Pancreas (tissue), 10 donors: ENCODE measurements at regions of chr9 and their contacts with region 1.

Region 1: DNA sequence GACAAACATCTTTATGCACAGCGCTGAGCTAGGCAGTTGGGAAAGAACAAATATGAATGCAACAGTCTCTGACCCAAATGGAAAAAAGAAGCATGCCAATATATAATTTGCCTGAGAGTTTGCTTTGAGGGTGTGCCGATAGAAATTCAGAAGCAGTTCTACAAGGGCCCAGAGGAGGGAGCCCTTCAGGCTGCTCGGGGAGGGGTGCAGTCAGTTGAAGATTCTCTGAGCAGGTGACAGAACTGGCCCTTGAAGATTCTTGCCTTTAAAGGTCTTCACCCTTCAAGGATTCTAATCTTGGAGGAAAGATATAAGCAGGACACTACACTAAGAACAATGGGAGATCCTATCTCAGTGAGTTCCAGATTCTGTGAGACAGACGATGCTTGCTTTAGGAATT is 3.7 kb upstream of the PAPPA start:
- DNase-seq: peak in 3 of 6 donors; percentile 25 to 56 (median 33)
- ATAC-seq: peak; percentile 69 to 81 (median 74)
- H3K4me3 ChIP-seq: no peak overlapping the region
- H3K27ac ChIP-seq: no peak overlapping the region
- H3K4me1 ChIP-seq: no peaks in the 10 kb centered on the region
- H3K27me3 ChIP-seq: peaks cover 0 to 8% (median 0%) of the 10 kb centered on the region in 4 donors
- CTCF ChIP-seq: peak; percentile 48 to 64 (median 52)

Region 2: DNA sequence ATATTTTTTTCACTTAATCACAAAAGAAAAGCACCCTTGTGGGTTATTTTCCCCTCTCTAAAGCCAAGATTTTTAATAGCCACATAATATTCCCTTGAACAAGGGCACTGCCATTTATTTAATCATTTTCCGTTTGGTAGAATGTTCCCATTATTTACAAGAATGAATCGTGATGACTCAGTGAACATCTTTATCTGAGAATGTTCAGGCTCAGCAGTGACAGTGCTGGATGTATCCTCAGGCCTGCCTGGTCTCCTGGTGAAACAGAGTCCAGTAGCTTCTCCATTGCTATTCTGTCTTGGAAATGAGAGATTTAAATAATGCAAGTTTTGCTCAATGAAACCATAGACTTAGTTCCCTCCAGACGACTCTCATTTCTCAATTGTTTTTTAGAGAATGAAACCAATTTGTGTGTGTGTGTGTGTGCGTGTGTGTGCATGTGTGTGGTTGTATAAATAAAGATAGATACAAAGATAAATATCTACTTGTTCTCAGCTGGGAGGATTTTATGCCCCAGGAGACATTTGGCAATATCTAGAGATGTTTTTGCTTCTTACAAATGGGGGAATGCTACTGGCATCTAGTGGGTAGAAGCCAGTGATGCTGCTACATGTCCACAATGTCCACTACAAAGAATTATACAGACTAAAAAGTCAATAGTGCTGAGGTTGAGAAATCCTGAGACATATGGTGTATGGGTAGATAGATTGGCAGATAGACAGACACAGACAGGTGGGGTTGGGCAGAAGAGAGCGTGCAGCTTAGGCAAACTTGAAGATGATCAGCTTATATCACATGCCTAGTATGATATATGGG is 58.8 kb after region 1 on chr9:
- intact Hi-C with region 1: no loop called
- DNase-seq: no peak
- ATAC-seq: no peak
- H3K4me3 ChIP-seq: no peak overlapping the region
- H3K27ac ChIP-seq: no peak overlapping the region
- H3K4me1 ChIP-seq: no peaks in the 10 kb centered on the region
- H3K27me3 ChIP-seq: no peaks in the 10 kb centered on the region
- CTCF ChIP-seq: no peak

Region 3: DNA sequence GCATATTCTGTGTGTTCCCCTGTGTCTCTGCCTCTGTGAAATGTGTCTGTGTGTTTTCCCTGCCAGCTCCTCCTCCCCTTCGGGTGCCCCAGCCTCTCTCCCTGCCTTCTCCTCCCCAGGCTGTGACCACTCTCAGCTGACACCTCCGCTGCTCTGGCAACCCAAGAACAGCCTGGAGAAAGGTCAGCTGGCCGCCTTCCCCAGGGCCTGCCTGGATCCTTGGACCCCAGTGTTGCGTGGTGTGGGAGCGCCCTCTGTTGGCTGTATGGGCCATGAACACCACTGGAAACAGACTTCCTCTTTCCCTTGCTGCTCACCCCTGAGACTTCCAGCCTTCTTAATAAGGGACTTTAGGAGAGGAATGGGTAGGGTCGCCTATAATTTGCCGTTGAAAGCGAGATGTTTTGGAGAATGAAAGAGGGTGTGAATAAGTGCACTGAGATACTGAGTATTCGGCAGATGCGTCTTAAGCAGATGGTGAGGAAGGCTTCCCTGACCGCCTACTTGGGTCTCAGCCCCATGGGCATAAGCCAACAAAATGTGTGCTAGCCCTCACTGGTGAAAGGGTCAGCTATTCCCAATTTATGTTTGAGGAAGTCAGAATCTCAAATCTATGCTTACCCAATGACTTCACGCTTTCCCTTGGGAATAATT is 422.4 kb after region 1 on chr9:
- intact Hi-C with region 1: loop called in 2 of 3 experiments (anchors 5 to 10 kb)
- DNase-seq: peak; percentile 87 to 95 (median 94)
- ATAC-seq: peak; percentile 86 to 92 (median 90)
- H3K4me3 ChIP-seq: no peak overlapping the region
- H3K27ac ChIP-seq: no peak overlapping the region
- H3K4me1 ChIP-seq: peaks cover 14 to 52% (median 26%) of the 10 kb centered on the region in 3 donors
- H3K27me3 ChIP-seq: no peaks in the 10 kb centered on the region
- CTCF ChIP-seq: peak; percentile 66 to 91 (median 80)

Region 4: DNA sequence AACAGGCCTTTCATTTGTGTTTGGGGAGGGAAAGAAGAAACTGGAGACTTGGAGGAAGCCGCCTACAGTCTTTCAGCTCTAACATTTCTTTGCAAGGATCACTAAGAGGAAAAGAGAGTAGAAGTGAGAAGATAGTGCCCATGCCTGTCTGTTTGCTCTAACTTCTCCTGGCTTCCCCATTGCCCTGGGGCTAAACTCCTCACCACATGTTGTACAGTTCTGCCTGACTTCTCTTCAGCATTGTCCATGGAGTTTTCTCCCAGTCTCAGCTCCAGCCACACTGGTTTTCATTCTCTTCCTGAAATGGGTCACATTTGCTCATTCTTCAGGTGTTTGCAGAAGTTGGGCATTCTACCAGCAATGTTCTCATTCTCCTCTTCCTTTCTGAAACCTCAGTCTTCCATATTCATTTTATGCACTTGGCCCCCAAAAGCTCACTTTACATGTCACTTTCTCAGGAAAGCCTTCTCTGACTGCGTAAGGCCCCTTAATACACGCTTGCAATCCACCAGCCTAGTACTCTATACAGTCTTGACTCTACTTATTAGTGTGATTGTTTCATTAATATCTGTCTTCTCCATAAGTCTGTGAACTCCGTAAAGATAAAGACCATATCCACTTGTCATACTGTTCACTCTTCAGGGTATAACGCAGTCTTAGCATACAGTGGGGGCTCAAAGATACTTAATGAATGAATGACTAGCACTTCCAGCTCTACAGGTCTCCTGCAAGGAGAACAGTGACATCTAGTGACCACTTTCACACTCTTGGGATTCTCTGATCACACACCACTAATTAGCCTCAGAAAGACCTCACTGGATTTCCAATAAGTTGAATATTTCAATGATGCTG is 497.0 kb after region 1 on chr9:
- intact Hi-C with region 1: loop called in 1 of 3 experiments (anchors 10 kb)
- DNase-seq: no peak
- ATAC-seq: peak in 3 of 4 donors; percentile 72 to 87 (median 77)
- H3K4me3 ChIP-seq: no peak overlapping the region
- H3K27ac ChIP-seq: no peak overlapping the region
- H3K4me1 ChIP-seq: no peaks in the 10 kb centered on the region
- H3K27me3 ChIP-seq: no peaks in the 10 kb centered on the region
- CTCF ChIP-seq: peak in 3 of 4 donors; percentile 35 to 43 (median 43)